Caco-2 (cell line): ENCODE measurements at regions of chr5 and their contacts with region 1.

Region 1: DNA sequence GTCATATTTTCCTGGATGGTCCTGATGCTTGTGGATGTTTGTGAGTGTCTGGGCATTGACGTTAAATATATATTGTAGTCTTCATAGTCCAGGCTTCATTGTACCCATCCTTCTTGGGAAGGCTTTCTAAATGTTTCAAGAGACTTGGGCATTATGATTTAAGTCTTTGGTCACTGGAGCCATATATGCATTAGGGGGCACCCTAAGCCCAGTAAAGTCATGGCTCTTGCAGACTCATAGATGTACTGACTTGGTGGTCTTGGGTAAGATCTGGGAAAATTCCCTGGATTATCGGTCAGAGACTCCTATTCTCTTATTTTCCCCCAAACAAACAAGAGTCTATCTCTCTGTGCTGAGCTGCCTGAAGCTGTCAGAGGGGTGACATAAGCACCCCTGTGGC is 271.1 kb downstream of the TRIM36 start:
- DNase-seq: no peak
- H3K4me3 ChIP-seq: no peak overlapping the region
- H3K4me3 Mint-ChIP-seq: no peak overlapping the region
- H3K27ac Mint-ChIP-seq: no peak overlapping the region
- H3K4me1 ChIP-seq: no peaks in the 10 kb centered on the region
- H3K4me1 Mint-ChIP-seq: no peaks in the 10 kb centered on the region
- H3K27me3 ChIP-seq: no peaks in the 10 kb centered on the region
- H3K27me3 Mint-ChIP-seq: no peaks in the 10 kb centered on the region
- CTCF ChIP-seq: no peak

Region 2: GRCh38 chr5:114957384-114957783 is 58.8 kb after region 1 on chr5:
- CTCF ChIA-PET with region 1: no interaction called
- POLR2A ChIA-PET with region 1: no interaction called
- intact Hi-C with region 1: no loop called
- DNase-seq: no peak
- H3K4me3 ChIP-seq: no peak overlapping the region
- H3K4me3 Mint-ChIP-seq: no peak overlapping the region
- H3K27ac Mint-ChIP-seq: no peak overlapping the region
- H3K4me1 ChIP-seq: no peaks in the 10 kb centered on the region
- H3K4me1 Mint-ChIP-seq: no peaks in the 10 kb centered on the region
- H3K27me3 ChIP-seq: no peaks in the 10 kb centered on the region
- H3K27me3 Mint-ChIP-seq: no peaks in the 10 kb centered on the region
- CTCF ChIP-seq: no peak

Region 3: DNA sequence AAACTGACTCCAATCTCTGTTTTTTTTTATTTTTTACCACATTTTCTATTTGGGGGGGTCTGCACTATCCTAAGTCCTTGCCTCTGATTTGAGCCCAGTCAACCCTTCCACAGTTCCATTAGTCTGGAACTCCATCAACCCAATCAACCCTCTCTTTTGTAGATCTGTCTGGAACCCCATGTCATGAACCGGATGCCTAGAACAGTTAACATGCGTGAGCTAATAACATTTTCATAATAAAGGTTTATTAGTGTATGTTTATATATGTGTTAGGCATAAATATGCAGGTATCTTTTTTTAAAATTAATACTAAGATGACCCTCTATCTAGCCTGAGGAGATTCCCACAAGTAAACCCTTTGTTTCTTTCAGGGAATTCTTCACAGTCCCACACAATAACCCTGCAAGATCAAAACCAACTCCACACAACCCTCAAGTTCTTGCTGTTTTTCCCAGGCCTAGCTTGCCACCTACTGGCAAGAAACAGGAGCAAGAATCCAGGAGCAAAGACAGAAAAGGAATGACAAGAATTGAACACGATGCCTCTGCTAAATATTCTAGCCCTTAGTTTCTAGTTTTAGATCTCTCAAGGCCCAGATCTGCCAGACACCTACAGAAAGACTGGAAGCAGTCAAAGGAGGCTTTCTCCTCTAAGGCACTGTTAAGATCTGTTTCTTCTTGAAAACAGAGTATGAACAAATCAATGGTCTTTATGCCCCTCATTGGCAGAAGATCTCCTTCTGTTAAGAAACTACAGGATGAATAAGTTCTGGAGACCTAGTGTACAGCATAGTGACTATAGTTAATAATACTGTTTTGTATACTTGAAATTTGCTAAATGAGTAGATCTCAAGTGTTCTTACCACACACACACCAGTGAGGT is 170.7 kb after region 1 on chr5:
- CTCF ChIA-PET with region 1: no interaction called
- POLR2A ChIA-PET with region 1: no interaction called
- intact Hi-C with region 1: loop called (anchors 5 kb)
- DNase-seq: peak; percentile 47 to 49
- H3K4me3 ChIP-seq: no peak overlapping the region
- H3K4me3 Mint-ChIP-seq: peak overlapping the region; percentile 63
- H3K27ac Mint-ChIP-seq: no peak overlapping the region
- H3K4me1 ChIP-seq: no peaks in the 10 kb centered on the region
- H3K4me1 Mint-ChIP-seq: no peaks in the 10 kb centered on the region
- H3K27me3 ChIP-seq: no peaks in the 10 kb centered on the region
- H3K27me3 Mint-ChIP-seq: peaks cover 4% of the 10 kb centered on the region
- CTCF ChIP-seq: peak; percentile 66 to 81

Region 4: GRCh38 chr5:115124741-115125140 is 226.1 kb after region 1 on chr5:
- CTCF ChIA-PET with region 1: no interaction called
- POLR2A ChIA-PET with region 1: no interaction called
- intact Hi-C with region 1: no loop called
- DNase-seq: no peak
- H3K4me3 ChIP-seq: no peak overlapping the region
- H3K4me3 Mint-ChIP-seq: no peak overlapping the region
- H3K27ac Mint-ChIP-seq: no peak overlapping the region
- H3K4me1 ChIP-seq: no peaks in the 10 kb centered on the region
- H3K4me1 Mint-ChIP-seq: no peaks in the 10 kb centered on the region
- H3K27me3 ChIP-seq: no peaks in the 10 kb centered on the region
- H3K27me3 Mint-ChIP-seq: peaks cover 4% of the 10 kb centered on the region
- CTCF ChIP-seq: no peak